PC-9 (cell line): ENCODE measurements at regions of chr3 and their contacts with region 1.

Region 1: DNA sequence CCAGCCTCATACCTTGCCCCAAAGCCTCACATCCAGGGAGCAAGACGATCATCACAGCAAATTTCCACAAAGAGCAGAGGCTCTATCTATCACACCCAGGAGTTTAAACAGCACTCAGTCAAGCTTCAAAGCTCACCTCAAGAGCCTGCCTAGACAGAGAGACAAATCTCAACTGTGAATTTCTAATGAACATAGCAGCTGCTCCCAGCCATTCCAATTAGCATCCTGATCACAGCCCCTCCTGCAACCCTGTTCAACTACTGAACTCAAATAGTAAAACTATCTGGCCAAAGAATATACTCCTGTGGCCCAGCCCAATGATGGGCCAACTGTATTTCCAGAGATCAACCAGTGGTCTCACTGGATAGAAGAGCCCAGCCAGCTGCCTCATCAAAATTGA is 269.8 kb downstream of the CTNNB1 start:
- DNase-seq: no peak
- H3K4me3 ChIP-seq: no peak overlapping the region
- H3K27ac ChIP-seq: no peak overlapping the region
- H3K4me1 ChIP-seq: no peaks in the 10 kb centered on the region
- H3K27me3 ChIP-seq: no peaks in the 10 kb centered on the region
- CTCF ChIP-seq: no peak

Region 2: GRCh38 chr3:41259449-41260062 is 209.5 kb before region 1 on chr3:
- CTCF ChIA-PET with region 1: no interaction called
- POLR2A ChIA-PET with region 1: interaction called, 12 read pairs
- intact Hi-C with region 1: no loop called
- DNase-seq: peak in 1 of 2 experiments; percentile 35
- H3K4me3 ChIP-seq: no peak overlapping the region
- H3K27ac ChIP-seq: no peak overlapping the region
- H3K4me1 ChIP-seq: peaks cover 4% of the 10 kb centered on the region; the same call in 1 of the 2 replicates
- H3K27me3 ChIP-seq: no peaks in the 10 kb centered on the region
- CTCF ChIP-seq: no peak

Region 3: DNA sequence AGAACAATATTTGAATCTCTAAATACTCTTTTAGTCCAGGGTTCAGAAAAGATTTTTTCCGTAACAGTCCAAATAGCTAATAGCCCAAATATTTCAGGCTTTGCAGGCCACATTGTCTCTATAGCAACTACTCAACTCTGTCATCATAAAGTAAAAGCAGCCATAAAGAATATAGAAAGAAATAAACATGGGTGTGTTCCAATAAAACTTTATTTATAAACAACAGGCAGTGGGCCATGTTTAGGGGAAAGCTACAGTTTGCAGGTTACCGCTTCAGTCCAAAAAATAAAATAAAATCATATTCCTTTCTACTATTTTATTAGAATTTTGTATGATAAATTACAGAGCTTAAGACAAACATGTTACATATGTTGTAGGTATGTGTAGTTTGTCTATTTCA is 153.7 kb after region 1 on chr3:
- CTCF ChIA-PET with region 1: no interaction called
- POLR2A ChIA-PET with region 1: no interaction called
- intact Hi-C with region 1: no loop called
- DNase-seq: no peak
- H3K4me3 ChIP-seq: no peak overlapping the region
- H3K27ac ChIP-seq: no peak overlapping the region
- H3K4me1 ChIP-seq: no peaks in the 10 kb centered on the region
- H3K27me3 ChIP-seq: no peaks in the 10 kb centered on the region
- CTCF ChIP-seq: no peak